Prostate gland (tissue), 2 donors: ENCODE measurements at regions of chr1 and their contacts with region 1.

Region 1: GRCh38 chr1:66924756-66925557 is at the starts of genes DNAI4 and MIER1:
- DNase-seq: peak; percentile 97
- H3K4me3 ChIP-seq: peak within 1 kb of the TSS; percentile 71 to 74
- H3K27ac ChIP-seq: peak within 1 kb of the TSS; percentile 80 to 92
- H3K4me1 ChIP-seq: peaks cover 2% of the 10 kb centered on the region
- H3K27me3 ChIP-seq: no peaks in the 10 kb centered on the region
- CTCF ChIP-seq: peak in 2 of 4 experiments; percentile 27 to 52
- POLR2A ChIP-seq: peak; percentile 81
- total RNA-seq, gene DNAI4: 8.0 to 8.5 TPM
- total RNA-seq, gene MIER1: 22.2 to 45.6 TPM

Region 2: DNA sequence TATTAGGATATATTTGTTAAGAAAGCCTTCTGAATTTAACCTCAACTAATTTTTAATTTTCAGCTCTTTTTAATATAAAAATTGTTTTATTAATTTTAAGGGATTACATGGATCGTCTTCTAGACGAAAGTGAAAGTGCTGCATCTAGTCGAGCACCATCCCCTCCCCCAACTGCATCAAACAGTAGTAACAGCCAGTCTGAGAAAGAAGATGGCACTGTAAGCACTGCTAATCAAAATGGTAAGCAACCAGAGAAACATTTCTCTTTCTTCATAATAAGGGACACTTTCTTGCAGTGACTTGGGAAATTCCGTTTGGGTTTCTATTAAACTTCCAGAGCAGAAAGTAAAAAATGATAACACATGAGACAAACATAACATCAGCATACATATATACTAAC is 56.7 kb after region 1 on chr1:
- intact Hi-C with region 1: loop called (anchors 10 kb)
- DNase-seq: no peak
- H3K4me3 ChIP-seq: peak overlapping the region in 1 of 2 donors; percentile 5
- H3K27ac ChIP-seq: peak overlapping the region; percentile 27 to 42
- H3K4me1 ChIP-seq: no peaks in the 10 kb centered on the region
- H3K27me3 ChIP-seq: no peaks in the 10 kb centered on the region
- CTCF ChIP-seq: no peak
- POLR2A ChIP-seq: no peak

Region 3: DNA sequence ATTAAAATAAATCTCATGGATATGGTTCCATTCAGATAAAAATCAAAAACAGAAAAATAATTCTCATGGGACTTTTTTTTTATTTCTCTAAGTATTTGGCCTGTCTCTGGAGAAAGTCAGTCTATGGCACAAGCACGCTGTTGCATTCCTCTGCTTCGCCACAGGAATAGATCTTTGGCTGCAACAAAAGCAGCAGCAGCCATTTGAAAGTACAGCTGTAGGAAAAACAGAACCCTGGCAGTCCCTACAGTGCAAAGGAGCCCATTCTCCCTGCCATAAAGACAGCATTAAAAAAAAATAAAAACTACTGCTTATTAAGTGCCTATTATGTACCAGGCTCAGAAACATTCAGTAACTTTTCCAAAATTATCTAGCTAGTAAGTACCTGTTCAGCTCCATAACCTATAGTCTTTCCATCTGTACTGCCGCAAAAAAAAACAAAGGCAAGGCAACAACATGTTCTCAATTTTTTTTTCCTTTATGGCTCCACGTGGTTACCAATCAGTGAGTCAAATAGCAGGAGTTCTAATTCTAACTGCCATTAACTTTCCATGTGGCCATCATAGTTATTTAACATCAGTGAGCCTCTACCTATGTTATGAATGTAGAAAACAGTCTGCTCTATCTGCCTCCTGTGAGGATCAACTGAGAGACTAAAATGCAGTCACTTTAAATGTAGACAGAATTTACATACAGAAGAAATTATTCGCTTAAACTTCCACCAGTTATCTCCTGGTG is 106.3 kb after region 1 on chr1:
- intact Hi-C with region 1: no loop called
- DNase-seq: no peak
- H3K4me3 ChIP-seq: no peak overlapping the region
- H3K27ac ChIP-seq: no peak overlapping the region
- H3K4me1 ChIP-seq: no peaks in the 10 kb centered on the region
- H3K27me3 ChIP-seq: no peaks in the 10 kb centered on the region
- CTCF ChIP-seq: no peak
- POLR2A ChIP-seq: no peak